Sciatic nerve (tissue), 2 donors: ENCODE measurements at regions of chr12 and their contacts with region 1.

Region 1: DNA sequence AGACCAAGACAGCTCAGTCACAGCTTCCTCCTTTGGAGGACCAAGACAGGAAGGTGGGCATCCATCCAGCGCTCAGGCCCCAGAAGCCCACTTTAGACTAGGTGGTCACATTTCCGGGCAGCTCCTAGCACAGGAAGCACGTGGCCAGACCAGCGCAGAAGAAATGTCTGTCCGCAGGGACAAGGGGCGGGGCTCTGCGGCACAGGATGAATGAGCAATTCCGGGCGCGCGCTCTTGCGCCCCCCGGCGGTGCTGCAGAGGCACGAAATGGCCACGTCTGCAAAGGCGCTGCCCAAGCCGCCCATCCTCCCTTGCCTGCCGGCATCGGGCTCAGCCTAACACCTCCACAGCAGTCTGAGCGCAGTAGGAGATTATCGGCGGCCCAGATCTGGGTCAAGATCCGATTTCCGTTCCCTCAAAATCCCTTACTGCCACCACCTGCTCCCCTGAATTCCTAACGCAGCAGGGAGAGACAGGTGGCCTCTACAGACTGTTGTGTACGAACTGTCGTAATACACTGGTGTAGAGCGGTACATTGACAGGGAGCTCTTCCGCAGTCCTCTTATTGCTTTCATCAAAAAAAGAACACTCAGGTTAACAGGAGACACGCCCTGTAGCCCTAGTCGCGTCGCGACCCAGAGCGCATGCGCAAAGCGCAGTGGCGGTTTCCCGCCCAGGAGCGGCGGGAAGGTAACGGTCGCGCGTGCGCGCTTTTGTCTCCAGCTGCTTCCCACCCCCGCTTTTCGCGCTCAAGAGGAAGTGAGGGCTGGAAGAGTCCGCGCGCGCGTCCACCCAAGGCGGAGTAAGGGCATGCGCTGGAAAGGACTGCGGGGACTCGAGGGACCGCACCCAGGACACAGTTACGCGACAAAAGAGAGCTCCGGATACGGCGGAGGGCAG is 794 bp downstream of the TUBA1B start:
- DNase-seq: peak; percentile 96
- ATAC-seq: peak; percentile 93

Region 2: DNA sequence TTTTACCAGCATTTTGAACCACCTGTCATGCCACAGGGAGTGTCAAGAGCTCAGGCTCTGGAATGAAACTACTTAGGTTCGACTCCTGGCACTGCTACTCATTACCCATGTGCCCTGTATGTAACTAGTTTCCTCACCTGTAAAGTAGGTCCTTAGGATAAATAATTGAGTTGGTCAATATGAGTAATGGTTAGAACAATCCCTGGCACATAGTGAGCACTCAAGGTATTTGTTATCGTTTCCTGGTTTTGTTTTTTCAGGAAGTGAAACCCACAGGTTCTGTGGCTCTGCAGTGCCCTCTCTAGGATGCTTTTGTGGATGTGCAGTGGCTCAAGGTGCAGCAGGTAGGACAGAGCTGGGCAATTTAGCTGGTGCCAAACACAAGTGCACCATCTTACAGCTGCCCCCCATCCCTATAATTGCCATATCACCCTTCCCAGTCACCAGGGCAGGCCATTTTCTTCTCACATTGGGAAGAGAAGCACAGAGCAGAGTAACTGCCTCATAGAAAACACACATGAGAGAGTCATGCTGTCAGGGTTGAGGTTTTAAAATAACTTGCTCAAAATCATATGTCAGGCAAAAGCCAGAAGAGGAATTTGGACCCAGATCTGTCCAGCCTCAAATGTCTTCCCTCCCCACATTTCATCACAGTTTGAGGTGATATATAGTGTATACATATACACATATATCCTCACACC is 1722.1 kb before region 1 on chr12:
- intact Hi-C with region 1: no loop called
- DNase-seq: no peak
- ATAC-seq: no peak

Region 3: GRCh38 chr12:49031553-49032162 is 98.7 kb before region 1 on chr12:
- intact Hi-C with region 1: no loop called
- DNase-seq: no peak
- ATAC-seq: no peak

Region 4: DNA sequence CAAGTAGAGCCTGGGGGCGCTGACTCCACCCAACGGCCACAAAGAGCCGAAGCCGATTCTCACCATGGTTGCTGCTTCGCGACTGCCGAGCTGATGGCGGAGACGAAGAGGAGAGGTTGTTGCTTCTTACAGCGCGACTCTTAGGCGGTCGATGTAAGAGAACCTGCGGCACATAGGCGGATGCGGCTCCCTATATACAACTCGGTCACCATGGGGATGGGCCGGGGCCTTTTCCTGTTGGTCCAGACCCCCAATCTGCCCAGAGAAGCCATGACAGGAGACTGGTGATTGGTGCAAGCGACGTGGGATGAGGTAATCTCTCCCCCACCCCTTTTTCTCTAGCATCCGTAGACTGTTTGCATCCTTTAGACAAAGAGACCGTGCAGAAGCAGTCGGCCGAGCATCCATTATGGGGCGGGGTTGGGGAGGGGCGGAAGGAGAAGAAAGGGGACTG is 58.5 kb after region 1 on chr12 and contains the start of gene TUBA1A:
- intact Hi-C with region 1: loop called (anchors 10 kb)
- DNase-seq: peak; percentile 96
- ATAC-seq: peak; percentile 97
- total RNA-seq, gene TUBA1A: 346 TPM